ENCODE measurements at regions of chrX and their contacts with region 1.

Region 1: GRCh38 chrX:13750204-13750603 is 15.7 kb downstream of the OFD1 start:
- DNase-seq: peak in 1 of 2 donors; percentile 63
- ATAC-seq: peak in 1 of 3 donors; percentile 60
- H3K4me3 ChIP-seq: no peak overlapping the region
- H3K4me3 Mint-ChIP-seq: no peak overlapping the region
- H3K27ac ChIP-seq: no peak overlapping the region
- H3K27ac Mint-ChIP-seq: peak overlapping the region; percentile 68 to 77
- H3K4me1 ChIP-seq: peaks cover 6% of the 10 kb centered on the region
- H3K4me1 Mint-ChIP-seq: peaks cover 19 to 36% of the 10 kb centered on the region in 2 donors
- H3K27me3 ChIP-seq: no peaks in the 10 kb centered on the region
- H3K27me3 Mint-ChIP-seq: no peaks in the 10 kb centered on the region
- CTCF ChIP-seq: no peak

Region 2: GRCh38 chrX:15335135-15336022 is 1585.2 kb after region 1 on chrX and contains the start of gene PIGA:
- intact Hi-C with region 1: loop called (anchors 10 kb)
- DNase-seq: peak; percentile 84 to 95
- ATAC-seq: peak; percentile 85 to 98 (median 88)
- H3K4me3 ChIP-seq: peak within 1 kb of the TSS; percentile 94
- H3K4me3 Mint-ChIP-seq: peak within 1 kb of the TSS; percentile 89
- H3K27ac ChIP-seq: peak within 1 kb of the TSS; percentile 95
- H3K27ac Mint-ChIP-seq: peak within 1 kb of the TSS; percentile 93
- H3K4me1 ChIP-seq: peaks cover 11% of the 10 kb centered on the region
- H3K4me1 Mint-ChIP-seq: peaks cover 0 to 14% of the 10 kb centered on the region in 2 donors
- H3K27me3 ChIP-seq: peaks cover 3% of the 10 kb centered on the region
- H3K27me3 Mint-ChIP-seq: peaks cover 8 to 34% of the 10 kb centered on the region in 2 donors
- CTCF ChIP-seq: no peak
- total RNA-seq, gene PIGA: 71.8 to 111 (median 87.6) TPM

Measured in natural killer cell (primary cell).